T-cell (primary cell): ENCODE measurements at regions of chr2 and their contacts with region 1.

Region 1: GRCh38 chr2:241686649-241687425 is at the start of gene DTYMK:
- DNase-seq: peak; percentile 89 to 97 (median 94)
- ATAC-seq: peak; percentile 95 to 96 (median 96)
- H3K4me3 ChIP-seq: peak within 1 kb of the TSS; percentile 84 to 86
- H3K4me3 Mint-ChIP-seq: peak within 1 kb of the TSS; percentile 86 to 94 (median 89)
- H3K27ac ChIP-seq: peak within 1 kb of the TSS; percentile 55
- H3K27ac Mint-ChIP-seq: peak within 1 kb of the TSS; percentile 88 to 89
- H3K4me1 ChIP-seq: peaks cover 12 to 36% of the 10 kb centered on the region in 2 experiments
- H3K4me1 Mint-ChIP-seq: peaks cover 27 to 40% (median 36%) of the 10 kb centered on the region in 3 donors
- H3K27me3 ChIP-seq: no peaks in the 10 kb centered on the region
- H3K27me3 Mint-ChIP-seq: no peaks in the 10 kb centered on the region
- total RNA-seq, gene DTYMK: 11.6 to 23.6 (median 18.2) TPM

Region 2: GRCh38 chr2:241479026-241479898 is 207.6 kb before region 1 on chr2:
- CTCF ChIA-PET with region 1: no interaction called
- POLR2A ChIA-PET with region 1: no interaction called
- DNase-seq: no peak
- ATAC-seq: no peak
- H3K4me3 ChIP-seq: no peak overlapping the region
- H3K4me3 Mint-ChIP-seq: no peak overlapping the region
- H3K27ac ChIP-seq: no peak overlapping the region
- H3K27ac Mint-ChIP-seq: no peak overlapping the region
- H3K4me1 ChIP-seq: no peaks in the 10 kb centered on the region
- H3K4me1 Mint-ChIP-seq: no peaks in the 10 kb centered on the region
- H3K27me3 ChIP-seq: peaks cover 0 to 15% of the 10 kb centered on the region in 2 experiments
- H3K27me3 Mint-ChIP-seq: no peaks in the 10 kb centered on the region

Region 3: DNA sequence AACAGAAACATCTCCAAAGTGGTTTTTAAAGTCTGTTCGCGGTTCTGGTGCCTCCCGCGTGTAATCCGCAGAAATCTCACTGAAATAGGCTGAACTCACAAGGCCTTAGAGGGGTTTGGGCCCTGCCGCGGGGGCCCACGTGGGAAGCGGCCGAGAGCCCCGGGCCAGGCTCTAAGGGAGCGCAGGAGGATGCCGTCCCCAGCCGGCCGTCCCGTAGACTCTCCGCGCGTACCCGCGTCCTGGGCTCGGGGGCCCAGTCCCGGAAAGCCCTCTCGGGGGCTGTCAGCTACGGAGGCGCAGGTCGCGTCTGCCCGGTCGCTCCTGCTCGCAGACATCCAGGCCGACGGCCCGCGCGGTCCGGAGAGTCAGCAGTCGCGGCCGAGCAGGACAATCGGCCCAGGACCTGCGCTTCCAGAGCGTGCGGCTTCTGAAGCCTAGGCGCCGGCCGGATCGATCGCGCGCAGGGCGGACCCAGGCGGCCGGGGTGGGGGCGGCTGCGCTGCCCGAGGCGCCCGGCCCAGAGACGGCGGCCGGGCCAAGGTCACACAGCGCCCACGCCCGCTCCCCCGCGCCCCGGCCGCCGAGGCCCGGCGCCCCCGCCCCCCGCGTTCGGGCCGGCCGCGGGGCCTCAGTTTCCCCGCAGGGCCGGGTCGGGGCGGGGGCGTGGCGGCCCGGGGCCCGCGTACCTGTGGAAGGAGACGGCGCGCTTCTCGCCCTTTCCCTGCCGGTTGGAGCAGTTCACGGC is 50.4 kb before region 1 on chr2:
- CTCF ChIA-PET with region 1: interaction called in 1 of 2 experiments, 3 read pairs
- POLR2A ChIA-PET with region 1: interaction called in 1 of 2 experiments, 12 read pairs
- DNase-seq: peak in 17 of 35 experiments; percentile 1 to 39 (median 16)
- ATAC-seq: peak; percentile 25 to 39 (median 33)
- H3K4me3 ChIP-seq: peak overlapping the region; percentile 51 to 52
- H3K4me3 Mint-ChIP-seq: peak overlapping the region; percentile 75 to 79 (median 77)
- H3K27ac ChIP-seq: no peak overlapping the region
- H3K27ac Mint-ChIP-seq: peak overlapping the region; percentile 27 to 58
- H3K4me1 ChIP-seq: peaks cover 13 to 36% of the 10 kb centered on the region in 2 experiments
- H3K4me1 Mint-ChIP-seq: peaks cover 48 to 52% (median 49%) of the 10 kb centered on the region in 3 donors
- H3K27me3 ChIP-seq: peaks cover 0 to 2% of the 10 kb centered on the region in 2 experiments
- H3K27me3 Mint-ChIP-seq: no peaks in the 10 kb centered on the region

Region 4: DNA sequence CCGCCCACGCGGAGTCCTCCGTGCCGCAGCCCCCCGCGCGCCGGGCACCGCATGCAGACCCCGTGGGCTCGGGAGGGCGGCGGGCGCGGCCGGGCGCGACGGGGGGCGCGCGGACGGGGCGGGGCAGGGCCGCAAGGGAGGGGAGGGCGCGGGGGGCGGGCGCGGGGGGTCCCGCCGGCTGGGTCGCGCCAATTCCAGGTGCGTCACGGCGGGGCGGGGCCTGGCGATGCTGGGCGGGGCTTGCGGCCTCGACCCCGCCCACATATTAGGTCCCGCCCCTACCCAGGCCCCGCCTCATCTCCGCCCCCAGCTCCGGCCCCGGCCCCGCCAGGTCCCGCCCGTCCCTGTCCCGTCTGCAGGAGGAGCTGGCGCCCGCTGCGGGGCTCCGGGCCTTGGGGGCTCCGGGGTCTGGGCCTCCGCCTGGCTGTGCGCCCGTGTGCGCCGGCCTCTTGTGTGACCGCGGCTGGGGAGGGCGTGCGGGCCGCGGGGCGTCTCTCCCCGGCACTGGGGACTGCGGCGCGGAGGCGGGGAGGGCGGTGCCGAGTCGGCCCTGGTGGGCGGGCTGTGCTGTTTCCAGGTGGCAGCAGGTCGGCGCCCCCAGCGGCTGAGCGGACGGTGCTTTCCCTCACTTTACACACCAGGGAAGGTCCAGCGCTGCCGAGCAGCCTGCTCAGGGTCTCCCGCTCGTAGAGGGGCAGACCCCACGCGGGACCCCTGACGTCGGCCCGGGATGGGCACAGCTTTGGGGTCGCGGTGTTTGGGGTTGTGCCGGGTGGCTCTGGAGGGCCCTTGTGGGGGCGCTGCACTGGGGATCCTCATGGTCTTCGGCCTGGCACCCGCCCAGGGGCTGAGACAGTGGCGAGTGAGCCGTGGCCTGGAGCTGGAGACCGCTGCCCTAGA is 15.5 kb after region 1 on chr2:
- CTCF ChIA-PET with region 1: interaction called in 1 of 2 experiments, 15 read pairs
- POLR2A ChIA-PET with region 1: interaction called in 1 of 2 experiments, 4 read pairs
- DNase-seq: peak; percentile 78 to 94 (median 87)
- ATAC-seq: peak; percentile 73 to 83 (median 75)
- H3K4me3 ChIP-seq: peak overlapping the region; percentile 67 to 71
- H3K4me3 Mint-ChIP-seq: peak overlapping the region; percentile 77 to 84 (median 81)
- H3K27ac ChIP-seq: peak overlapping the region; percentile 62
- H3K27ac Mint-ChIP-seq: peak overlapping the region; percentile 74 to 86
- H3K4me1 ChIP-seq: peaks cover 6 to 29% of the 10 kb centered on the region in 2 experiments
- H3K4me1 Mint-ChIP-seq: peaks cover 21 to 31% (median 26%) of the 10 kb centered on the region in 3 donors
- H3K27me3 ChIP-seq: no peaks in the 10 kb centered on the region
- H3K27me3 Mint-ChIP-seq: no peaks in the 10 kb centered on the region

Region 5: GRCh38 chr2:241720099-241720498 is 33.3 kb after region 1 on chr2:
- CTCF ChIA-PET with region 1: no interaction called
- POLR2A ChIA-PET with region 1: interaction called in 1 of 2 experiments, 14 read pairs
- DNase-seq: no peak
- ATAC-seq: no peak
- H3K4me3 ChIP-seq: no peak overlapping the region
- H3K4me3 Mint-ChIP-seq: no peak overlapping the region
- H3K27ac ChIP-seq: no peak overlapping the region
- H3K27ac Mint-ChIP-seq: no peak overlapping the region
- H3K4me1 ChIP-seq: no peaks in the 10 kb centered on the region
- H3K4me1 Mint-ChIP-seq: no peaks in the 10 kb centered on the region
- H3K27me3 ChIP-seq: no peaks in the 10 kb centered on the region
- H3K27me3 Mint-ChIP-seq: no peaks in the 10 kb centered on the region